Activated CD4-positive, alpha-beta T cell treated with anti-CD3 and anti-CD28 coated beads for 36 hours (primary cell): ENCODE measurements at regions of chr6 and their contacts with region 1.

Region 1: DNA sequence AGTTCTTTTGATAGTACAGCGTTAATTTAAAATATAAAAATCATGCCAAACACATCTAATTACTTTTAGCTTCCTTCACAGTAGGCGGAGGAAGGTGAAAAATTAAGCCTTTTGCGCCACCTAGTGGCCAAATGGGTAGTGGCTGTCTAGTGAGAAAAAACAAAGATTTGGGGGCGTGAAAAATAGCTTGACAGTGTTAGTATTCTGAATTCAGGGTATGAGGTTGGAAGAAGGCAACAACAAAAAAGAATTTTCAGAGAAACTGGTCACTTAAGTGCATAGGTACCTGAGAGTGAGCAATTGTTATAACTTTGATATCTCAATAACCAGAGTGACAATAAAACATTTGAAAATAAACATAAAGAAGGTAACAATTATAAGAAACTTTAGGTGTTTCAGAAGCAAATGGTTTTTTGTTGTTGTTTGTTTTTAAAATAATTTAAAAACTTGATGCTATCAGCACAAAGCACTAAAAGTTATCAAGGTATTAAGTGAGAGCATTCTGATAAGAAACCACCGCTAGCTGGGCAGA is 14.3 kb downstream of the PSMB9 start:
- DNase-seq: peak; percentile 92
- ATAC-seq: peak; percentile 73
- H3K4me3 Mint-ChIP-seq: no peak overlapping the region
- H3K27ac Mint-ChIP-seq: no peak overlapping the region
- H3K4me1 Mint-ChIP-seq: peaks cover 35% of the 10 kb centered on the region
- H3K27me3 Mint-ChIP-seq: peaks cover 8% of the 10 kb centered on the region

Region 2: DNA sequence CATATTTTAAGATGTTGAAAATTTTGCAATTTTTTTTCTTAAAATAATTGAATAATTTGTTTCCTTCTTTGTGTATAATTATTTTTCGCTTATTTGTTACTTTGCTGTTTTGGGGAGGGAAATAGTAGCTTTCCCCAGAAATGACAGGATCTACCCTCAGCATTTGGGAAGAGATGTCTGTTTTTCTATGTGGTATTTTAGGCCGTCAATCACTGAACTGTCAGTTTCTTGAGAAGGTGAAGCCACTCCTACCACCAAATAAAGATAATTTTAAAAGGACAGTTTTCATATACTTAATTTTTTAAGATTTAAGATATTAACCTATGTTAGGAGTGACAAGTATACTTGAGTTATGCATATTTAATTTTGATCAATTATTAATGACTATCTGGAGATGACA is 528.1 kb before region 1 on chr6:
- CTCF ChIA-PET with region 1: no interaction called
- POLR2A ChIA-PET with region 1: no interaction called
- intact Hi-C with region 1: no loop called
- DNase-seq: no peak
- ATAC-seq: no peak
- H3K4me3 Mint-ChIP-seq: no peak overlapping the region
- H3K27ac Mint-ChIP-seq: no peak overlapping the region
- H3K4me1 Mint-ChIP-seq: peaks cover 4% of the 10 kb centered on the region
- H3K27me3 Mint-ChIP-seq: peaks cover 6% of the 10 kb centered on the region

Region 3: GRCh38 chr6:32700391-32701040 is 167.8 kb before region 1 on chr6:
- CTCF ChIA-PET with region 1: interaction called, 4 read pairs
- POLR2A ChIA-PET with region 1: no interaction called
- intact Hi-C with region 1: loop called in 1 of 2 experiments (anchors 2 kb)
- DNase-seq: peak; percentile 28
- ATAC-seq: peak; percentile 42
- H3K4me3 Mint-ChIP-seq: no peak overlapping the region
- H3K27ac Mint-ChIP-seq: no peak overlapping the region
- H3K4me1 Mint-ChIP-seq: no peaks in the 10 kb centered on the region
- H3K27me3 Mint-ChIP-seq: peaks cover 29% of the 10 kb centered on the region

Region 4: DNA sequence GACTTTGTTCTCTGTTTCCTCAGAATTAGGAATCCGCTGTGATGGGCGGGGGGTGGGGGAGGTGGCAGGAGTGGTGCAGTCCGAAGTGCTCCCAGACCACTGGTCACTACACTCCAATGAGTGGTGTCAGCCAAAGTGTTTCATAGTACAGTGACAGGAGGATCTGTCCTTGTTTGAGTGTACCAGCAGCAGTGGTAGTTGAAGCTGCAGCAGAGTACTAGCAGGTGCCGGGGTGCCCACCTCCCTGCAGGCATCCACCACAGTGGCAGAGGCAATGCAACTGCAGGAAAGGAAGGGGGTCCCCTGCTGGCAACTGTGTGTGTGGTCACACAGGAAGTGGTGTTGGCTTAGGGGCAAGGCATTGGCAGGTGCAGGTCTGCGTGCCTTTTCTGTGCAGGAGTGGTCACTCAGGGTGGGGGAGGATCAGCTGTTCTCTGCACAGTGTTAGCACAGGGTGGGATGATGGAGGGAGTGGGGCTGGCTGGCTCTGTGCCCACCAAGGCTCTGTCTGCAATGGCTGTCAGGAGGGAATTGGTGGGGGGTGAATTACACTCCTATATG is 61.2 kb before region 1 on chr6:
- CTCF ChIA-PET with region 1: interaction called, 10 read pairs
- POLR2A ChIA-PET with region 1: interaction called, 3 read pairs
- intact Hi-C with region 1: no loop called
- DNase-seq: no peak
- ATAC-seq: no peak
- H3K4me3 Mint-ChIP-seq: no peak overlapping the region
- H3K27ac Mint-ChIP-seq: no peak overlapping the region
- H3K4me1 Mint-ChIP-seq: peaks cover 7% of the 10 kb centered on the region
- H3K27me3 Mint-ChIP-seq: peaks cover 29% of the 10 kb centered on the region

Region 5: DNA sequence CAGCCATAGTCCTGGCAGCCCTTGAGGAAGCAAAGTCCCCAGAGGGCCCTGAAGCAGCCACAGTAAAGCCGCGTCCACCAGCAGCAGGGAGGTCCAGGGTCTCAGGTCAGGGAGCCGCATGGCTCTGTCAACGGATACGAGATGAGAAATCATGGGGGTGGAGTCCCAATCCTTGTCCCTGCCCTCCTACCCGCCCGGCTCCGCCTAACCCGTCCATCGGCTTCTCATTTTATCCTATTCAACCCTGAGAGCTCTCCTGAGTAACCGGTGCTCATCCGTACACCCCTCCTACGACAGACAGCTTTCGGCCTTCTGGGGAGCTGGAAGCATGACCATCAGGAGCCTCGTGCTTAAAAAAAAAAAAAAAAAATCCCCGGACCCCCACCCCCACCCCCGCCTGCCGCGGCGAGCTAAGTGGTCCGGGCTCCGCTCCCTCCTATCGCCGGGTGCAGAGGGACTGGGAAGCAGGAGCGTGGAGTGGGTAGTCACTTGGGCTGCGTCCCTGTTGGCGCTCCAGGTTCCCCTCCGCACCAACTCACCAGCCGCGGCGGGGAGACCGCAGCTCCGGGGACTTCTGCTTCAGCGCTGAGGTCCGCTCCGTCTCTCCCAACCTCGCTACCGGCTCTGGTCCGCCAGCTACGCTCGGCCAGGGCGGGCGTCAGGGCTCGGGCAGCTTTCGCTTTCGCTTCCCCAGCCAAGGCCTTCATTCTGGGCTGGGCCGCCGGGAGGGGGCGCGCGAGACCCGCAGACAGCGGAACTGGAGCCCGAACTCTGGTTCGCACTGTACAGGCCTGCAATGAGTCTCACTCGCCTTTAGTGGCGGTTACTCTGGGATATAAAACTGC is 30.0 kb before region 1 on chr6 and contains the start of gene TAP2:
- CTCF ChIA-PET with region 1: interaction called, 253 read pairs
- POLR2A ChIA-PET with region 1: interaction called, 25 read pairs
- intact Hi-C with region 1: loop called (anchors 1 kb)
- DNase-seq: peak; percentile 99
- ATAC-seq: peak; percentile 82
- H3K4me3 Mint-ChIP-seq: peak within 1 kb of the TSS; percentile 95
- H3K27ac Mint-ChIP-seq: peak within 1 kb of the TSS; percentile 94
- H3K4me1 Mint-ChIP-seq: peaks cover 79% of the 10 kb centered on the region
- H3K27me3 Mint-ChIP-seq: no peaks in the 10 kb centered on the region
- total RNA-seq, gene TAP2: 96.4 to 150 TPM

Region 6: DNA sequence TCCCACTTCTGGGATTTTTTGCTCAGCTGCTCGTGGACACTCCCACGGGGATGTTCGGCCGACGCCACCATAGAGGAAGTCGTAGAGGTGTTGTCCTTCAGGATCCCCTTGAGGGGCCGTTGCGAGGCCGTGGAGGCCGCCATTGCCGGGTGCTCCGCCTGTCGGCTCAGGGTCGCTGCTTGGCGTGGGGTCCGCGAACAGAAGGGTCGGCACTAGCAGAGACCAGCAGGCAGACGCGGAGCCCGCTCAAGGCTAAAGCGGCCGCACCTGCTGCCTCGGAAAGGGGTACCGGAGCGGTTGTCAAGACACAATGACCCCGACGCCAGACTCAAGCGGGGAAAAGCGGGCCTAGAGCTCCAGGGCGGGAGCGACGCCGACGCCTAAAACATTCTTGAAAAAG is 11.4 kb after region 1 on chr6:
- CTCF ChIA-PET with region 1: interaction called, 16 read pairs
- POLR2A ChIA-PET with region 1: no interaction called
- intact Hi-C with region 1: no loop called
- DNase-seq: no peak
- ATAC-seq: no peak
- H3K4me3 Mint-ChIP-seq: no peak overlapping the region
- H3K27ac Mint-ChIP-seq: no peak overlapping the region
- H3K4me1 Mint-ChIP-seq: peaks cover 15% of the 10 kb centered on the region
- H3K27me3 Mint-ChIP-seq: peaks cover 5% of the 10 kb centered on the region

Region 7: DNA sequence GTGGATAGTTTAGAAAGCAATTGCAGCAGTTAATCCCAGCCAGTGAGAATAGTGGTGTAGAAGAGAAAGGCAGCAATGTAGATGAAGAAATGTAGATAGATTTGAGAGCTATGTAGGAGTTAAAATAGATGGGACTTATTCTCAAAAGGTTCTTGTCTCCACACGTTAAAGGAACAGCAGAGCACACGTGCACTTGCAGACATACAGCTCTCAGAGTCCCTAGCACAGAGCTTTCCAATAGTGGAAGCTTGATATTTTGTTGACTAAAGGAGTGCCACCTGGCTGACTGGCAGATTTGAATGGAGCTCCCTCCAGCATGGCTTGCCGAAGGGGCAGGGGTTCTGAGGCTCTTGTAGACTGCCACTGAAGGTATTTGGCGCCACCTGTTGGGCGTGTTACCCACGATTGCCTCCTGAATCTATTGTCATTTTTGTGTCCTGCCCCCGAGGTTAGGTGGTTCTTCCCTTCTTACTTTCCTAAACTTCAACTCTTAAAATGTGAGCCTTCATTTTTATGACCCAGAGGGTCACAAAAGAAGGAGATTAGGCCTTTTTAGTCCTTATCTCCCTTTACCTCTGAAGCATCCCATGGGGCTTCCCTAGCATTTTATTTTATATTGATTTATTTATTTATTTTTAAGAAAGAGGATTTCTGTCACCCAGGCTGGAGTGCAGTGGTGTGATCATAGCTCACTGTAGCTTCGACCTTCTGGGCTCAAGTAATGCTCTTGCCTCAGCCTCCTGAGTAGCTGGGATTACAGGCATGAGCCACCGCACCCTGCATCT is 116.5 kb after region 1 on chr6:
- CTCF ChIA-PET with region 1: interaction called, 27 read pairs
- POLR2A ChIA-PET with region 1: no interaction called
- intact Hi-C with region 1: no loop called
- DNase-seq: peak; percentile 96
- ATAC-seq: peak; percentile 88
- H3K4me3 Mint-ChIP-seq: no peak overlapping the region
- H3K27ac Mint-ChIP-seq: peak overlapping the region; percentile 44
- H3K4me1 Mint-ChIP-seq: peaks cover 15% of the 10 kb centered on the region
- H3K27me3 Mint-ChIP-seq: no peaks in the 10 kb centered on the region